IMR-90 (cell line): ENCODE measurements at regions of chr9 and their contacts with region 1.

Region 1: DNA sequence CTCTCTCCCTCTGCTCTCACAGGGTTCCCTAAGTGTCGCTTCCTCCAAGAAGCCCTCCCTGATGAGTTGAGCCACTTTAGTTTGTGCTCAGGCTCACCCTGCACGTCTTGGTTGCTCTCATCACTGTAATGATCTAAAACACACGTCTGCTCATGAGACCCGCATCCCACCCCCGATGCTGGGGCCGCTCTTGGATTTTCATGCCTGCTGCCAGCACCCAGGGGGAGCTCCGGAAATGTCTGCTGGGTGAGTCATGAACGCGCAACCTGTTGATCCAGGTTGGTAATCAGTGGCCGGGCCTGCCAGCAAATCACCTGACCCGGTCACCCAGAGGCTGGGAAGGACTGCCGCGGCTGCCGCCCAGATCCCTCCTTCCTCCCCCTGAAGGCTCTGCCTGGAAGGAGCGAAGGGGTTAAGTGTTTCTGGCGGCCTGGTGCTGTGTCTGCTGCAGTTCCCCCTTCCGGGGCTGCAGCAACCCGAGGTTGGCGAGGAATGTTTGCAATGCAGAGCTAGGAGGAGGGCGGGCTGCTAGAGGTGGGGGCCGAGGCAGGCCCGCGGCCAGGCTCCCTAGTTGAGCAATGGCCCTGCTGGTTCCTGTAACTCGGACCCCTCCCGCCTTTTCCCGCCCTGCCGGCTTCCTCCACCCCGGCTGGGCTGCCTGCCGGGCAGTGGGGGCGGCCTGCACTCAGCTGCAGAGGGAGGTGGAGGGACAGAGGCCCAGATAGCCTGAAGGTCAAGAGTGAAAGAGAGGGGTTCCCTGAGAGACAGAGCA is 156.1 kb upstream of the IER5L start:
- DNase-seq: peak; percentile 92
- ATAC-seq: peak; percentile 92
- H3K4me3 ChIP-seq: no peak overlapping the region
- H3K27ac ChIP-seq: peak overlapping the region; percentile 91
- H3K4me1 ChIP-seq: peaks cover 38% of the 10 kb centered on the region
- H3K27me3 ChIP-seq: no peaks in the 10 kb centered on the region
- CTCF ChIP-seq: 0 out of 2 replicates have a peak, but pooled peaks have one; percentile 9
- POLR2A ChIP-seq: no peak
- RAD21 ChIP-seq: peak; percentile 27

Region 2: GRCh38 chr9:128927731-128928411 is 406.3 kb before region 1 on chr9:
- CTCF ChIA-PET with region 1: no interaction called
- POLR2A ChIA-PET with region 1: no interaction called
- dilution Hi-C with region 1: no loop called
- in situ Hi-C with region 1: no loop called
- intact Hi-C with region 1: no loop called
- DNase-seq: peak; percentile 47
- ATAC-seq: peak; percentile 94
- H3K4me3 ChIP-seq: no peak overlapping the region
- H3K27ac ChIP-seq: no peak overlapping the region
- H3K4me1 ChIP-seq: no peaks in the 10 kb centered on the region
- H3K27me3 ChIP-seq: no peaks in the 10 kb centered on the region
- CTCF ChIP-seq: peak; percentile 86
- POLR2A ChIP-seq: peak; percentile 30; the same call in 1 of the 2 replicates
- RAD21 ChIP-seq: peak; percentile 93

Region 3: DNA sequence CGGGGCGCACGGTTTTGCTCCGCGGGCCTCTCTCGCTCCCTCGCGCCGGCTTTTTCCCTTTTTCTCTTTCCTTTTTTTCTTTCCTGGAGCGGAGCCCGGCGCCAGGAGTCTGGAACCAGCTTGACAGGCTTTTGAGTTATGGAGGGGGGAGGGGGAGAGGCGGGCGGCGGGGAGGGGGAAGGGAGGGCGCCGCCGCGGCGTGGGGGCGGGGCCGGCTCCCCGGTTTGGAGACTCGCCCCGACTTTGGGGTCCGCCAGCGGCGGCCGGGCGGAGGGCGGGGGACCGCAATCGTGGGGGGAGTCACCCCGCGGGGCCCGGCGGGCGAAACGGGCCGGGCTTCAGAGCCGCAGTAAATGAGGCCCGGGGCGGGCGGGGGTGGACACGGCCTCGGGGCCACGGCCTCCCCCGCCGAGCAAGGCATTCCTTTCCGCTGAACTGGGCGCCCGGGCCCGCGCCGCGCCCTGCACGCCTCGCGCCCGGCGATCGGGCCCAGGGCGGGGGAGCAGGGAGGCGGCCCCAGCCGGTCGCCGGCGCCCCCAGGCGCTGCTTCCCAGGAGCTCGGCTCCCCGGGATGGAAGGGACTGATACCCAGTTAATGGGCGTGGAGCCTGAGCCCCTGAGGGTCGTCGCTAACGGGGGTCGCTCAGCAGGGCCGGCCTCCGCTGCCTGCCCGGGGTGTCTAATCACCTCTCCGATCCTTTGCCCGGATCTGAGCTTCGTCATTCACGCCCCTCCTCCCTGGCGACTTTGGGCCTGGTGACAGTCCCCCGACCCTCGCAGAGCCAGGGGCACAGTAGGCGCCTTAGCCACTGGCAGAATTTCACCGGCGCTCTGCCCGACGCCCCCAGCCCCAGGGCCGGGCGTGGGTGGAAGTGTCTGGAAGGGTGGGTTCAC is 148.6 kb after region 1 on chr9:
- CTCF ChIA-PET with region 1: no interaction called
- POLR2A ChIA-PET with region 1: interaction called, 3 read pairs
- dilution Hi-C with region 1: no loop called
- in situ Hi-C with region 1: no loop called
- intact Hi-C with region 1: loop called (anchors 1 kb)
- DNase-seq: peak; percentile 84
- ATAC-seq: peak; percentile 86
- H3K4me3 ChIP-seq: no peak overlapping the region
- H3K27ac ChIP-seq: peak overlapping the region; percentile 99
- H3K4me1 ChIP-seq: peaks cover 49% of the 10 kb centered on the region
- H3K27me3 ChIP-seq: no peaks in the 10 kb centered on the region
- CTCF ChIP-seq: peak; percentile 43
- POLR2A ChIP-seq: peak; percentile 30
- RAD21 ChIP-seq: peak; percentile 59

Region 4: GRCh38 chr9:129487642-129488409 is 153.7 kb after region 1 on chr9:
- CTCF ChIA-PET with region 1: no interaction called
- POLR2A ChIA-PET with region 1: interaction called, 3 read pairs
- dilution Hi-C with region 1: no loop called
- in situ Hi-C with region 1: no loop called
- intact Hi-C with region 1: loop called (anchors 1 kb)
- DNase-seq: peak; percentile 65
- ATAC-seq: peak; percentile 6
- H3K4me3 ChIP-seq: peak overlapping the region; percentile 23
- H3K27ac ChIP-seq: peak overlapping the region; percentile 99
- H3K4me1 ChIP-seq: peaks cover 66% of the 10 kb centered on the region
- H3K27me3 ChIP-seq: no peaks in the 10 kb centered on the region
- CTCF ChIP-seq: no peak
- POLR2A ChIP-seq: peak; percentile 11; the same call in 1 of the 2 replicates
- RAD21 ChIP-seq: no peak